ENCODE measurements at regions of chr6 and their contacts with region 1.

Region 1: GRCh38 chr6:138588805-138589434 is 89.6 kb upstream of the NHSL1 start:
- DNase-seq: peak; percentile 69 to 71
- ATAC-seq: peak; percentile 45 to 68; a peak in 5 of 6 replicates
- H3K4me3 ChIP-seq: no peak overlapping the region
- H3K27ac ChIP-seq: 0 out of 6 replicates have a peak overlapping the region, but pooled peaks of 1 of the 2 experiments have one; percentile 12
- H3K4me1 ChIP-seq: peaks cover 18% of the 10 kb centered on the region
- CTCF ChIP-seq: peak; percentile 80
- EP300 ChIP-seq: no peak
- POLR2A ChIP-seq: no peak
- RAD21 ChIP-seq: peak; percentile 78

Region 2: GRCh38 chr6:138415125-138415524 is 173.8 kb before region 1 on chr6:
- CTCF ChIA-PET with region 1: interaction called, 3 read pairs
- POLR2A ChIA-PET with region 1: interaction called, 10 read pairs
- DNase-seq: no peak
- ATAC-seq: no peak
- H3K4me3 ChIP-seq: no peak overlapping the region
- H3K27ac ChIP-seq: no peak overlapping the region
- H3K4me1 ChIP-seq: peaks cover 16% of the 10 kb centered on the region
- CTCF ChIP-seq: no peak
- EP300 ChIP-seq: no peak
- POLR2A ChIP-seq: no peak
- RAD21 ChIP-seq: no peak

Region 3: DNA sequence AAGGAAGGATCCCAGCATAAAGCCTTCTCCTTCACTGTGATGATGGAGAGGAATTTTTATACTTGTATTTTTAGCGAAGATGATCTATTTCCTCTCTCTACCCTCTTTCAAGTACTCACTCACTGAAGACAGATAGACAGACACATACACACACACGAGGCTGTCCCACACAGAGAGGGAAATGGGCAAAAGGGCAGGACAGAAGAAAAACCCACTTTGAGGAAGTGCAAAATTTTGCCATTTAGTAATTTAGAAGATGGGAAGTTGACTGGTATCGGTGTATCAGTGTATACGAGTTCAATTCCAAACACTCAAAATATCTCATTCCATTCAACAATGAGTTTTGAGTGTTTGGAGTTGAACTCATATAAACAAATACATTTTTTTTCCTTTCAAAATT is 154.0 kb before region 1 on chr6:
- CTCF ChIA-PET with region 1: interaction called, 14 read pairs
- POLR2A ChIA-PET with region 1: no interaction called
- DNase-seq: no peak
- ATAC-seq: no peak
- H3K4me3 ChIP-seq: no peak overlapping the region
- H3K27ac ChIP-seq: no peak overlapping the region
- H3K4me1 ChIP-seq: no peaks in the 10 kb centered on the region
- CTCF ChIP-seq: no peak
- EP300 ChIP-seq: no peak
- POLR2A ChIP-seq: no peak
- RAD21 ChIP-seq: no peak

Region 4: DNA sequence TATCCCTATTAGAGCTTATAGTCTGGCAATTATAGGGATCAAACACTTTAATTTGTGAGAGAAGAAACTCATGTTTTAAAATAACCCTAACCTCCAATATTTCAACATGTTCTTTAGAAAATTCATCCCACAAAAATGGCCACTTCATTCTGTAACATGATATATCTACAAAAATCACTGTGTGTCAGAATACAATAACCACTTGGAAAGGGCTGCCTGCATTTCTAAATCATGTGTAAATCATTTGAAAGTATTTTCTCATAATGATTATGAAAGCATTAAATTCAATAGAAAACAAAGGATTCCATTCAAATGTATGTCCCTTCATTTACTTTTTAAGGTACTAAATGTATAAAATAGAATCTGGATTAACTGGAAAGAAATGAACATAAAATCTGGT is 11.8 kb after region 1 on chr6:
- CTCF ChIA-PET with region 1: interaction called, 11 read pairs
- POLR2A ChIA-PET with region 1: no interaction called
- DNase-seq: no peak
- ATAC-seq: no peak
- H3K4me3 ChIP-seq: no peak overlapping the region
- H3K27ac ChIP-seq: no peak overlapping the region
- H3K4me1 ChIP-seq: no peaks in the 10 kb centered on the region
- CTCF ChIP-seq: no peak
- EP300 ChIP-seq: no peak
- POLR2A ChIP-seq: no peak
- RAD21 ChIP-seq: no peak

Region 5: GRCh38 chr6:138772596-138773176 is 183.8 kb after region 1 on chr6:
- CTCF ChIA-PET with region 1: interaction called, 65 read pairs
- POLR2A ChIA-PET with region 1: no interaction called
- DNase-seq: no peak
- ATAC-seq: peak; percentile 7 to 15; a peak in 3 of 6 replicates
- H3K4me3 ChIP-seq: peak overlapping the region; percentile 71
- H3K27ac ChIP-seq: peak overlapping the region; percentile 98 to 99
- H3K4me1 ChIP-seq: peaks cover 5% of the 10 kb centered on the region; the same call in 1 of the 3 replicates
- CTCF ChIP-seq: no peak
- EP300 ChIP-seq: no peak
- POLR2A ChIP-seq: no peak
- RAD21 ChIP-seq: no peak